Activated CD4-positive, alpha-beta memory T cell treated with anti-CD3 and anti-CD28 coated beads for 36 hours (primary cell): ENCODE measurements at regions of chr12 and their contacts with region 1.

Region 1: GRCh38 chr12:81668475-81668874 is 90.7 kb downstream of the PPFIA2 start:
- DNase-seq: peak; percentile 16
- H3K4me3 Mint-ChIP-seq: no peak overlapping the region
- H3K27ac Mint-ChIP-seq: no peak overlapping the region
- H3K4me1 Mint-ChIP-seq: peaks cover 4% of the 10 kb centered on the region
- H3K27me3 Mint-ChIP-seq: no peaks in the 10 kb centered on the region

Region 2: GRCh38 chr12:81573228-81573627 is 95.2 kb before region 1 on chr12:
- CTCF ChIA-PET with region 1: no interaction called
- POLR2A ChIA-PET with region 1: no interaction called
- intact Hi-C with region 1: no loop called
- DNase-seq: no peak
- H3K4me3 Mint-ChIP-seq: no peak overlapping the region
- H3K27ac Mint-ChIP-seq: no peak overlapping the region
- H3K4me1 Mint-ChIP-seq: no peaks in the 10 kb centered on the region
- H3K27me3 Mint-ChIP-seq: no peaks in the 10 kb centered on the region

Region 3: DNA sequence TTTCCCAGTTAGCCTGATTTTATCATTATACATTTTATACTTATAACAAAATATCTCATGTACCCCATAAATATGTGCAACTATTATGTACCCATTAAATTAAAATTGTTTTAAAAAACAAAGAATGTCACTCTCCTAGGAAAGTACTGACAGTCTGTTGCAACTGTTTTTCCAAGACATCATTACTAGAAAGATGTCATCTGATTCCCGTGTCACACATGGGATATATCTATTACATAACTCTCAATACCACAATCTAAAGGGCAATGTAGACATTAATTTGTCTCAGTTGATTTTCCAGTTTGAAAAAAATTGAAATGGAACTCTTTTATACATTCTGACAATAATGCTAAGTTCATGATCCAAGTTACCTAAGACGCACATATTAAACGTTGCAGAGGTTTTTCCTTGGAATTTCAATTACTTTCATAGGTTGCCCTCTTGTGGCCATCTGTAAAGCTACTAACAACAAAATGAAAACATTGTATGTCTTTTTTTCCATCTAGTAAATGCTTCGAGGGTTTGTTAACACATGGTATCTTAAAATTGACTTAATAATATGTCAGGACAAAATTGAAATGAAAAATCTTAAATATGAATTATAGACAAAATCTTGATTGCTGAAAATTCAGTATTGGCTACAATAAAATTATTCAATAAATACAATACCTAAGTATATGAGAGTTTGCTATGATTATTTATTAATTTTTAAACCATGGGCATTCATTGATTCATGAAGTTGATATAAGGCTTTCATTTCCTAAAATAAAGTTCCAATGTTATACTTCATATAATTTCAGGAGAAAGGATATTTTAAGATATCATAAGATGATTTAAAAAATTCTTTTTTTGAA is 40.9 kb before region 1 on chr12:
- CTCF ChIA-PET with region 1: no interaction called
- POLR2A ChIA-PET with region 1: no interaction called
- intact Hi-C with region 1: no loop called
- DNase-seq: no peak
- H3K4me3 Mint-ChIP-seq: no peak overlapping the region
- H3K27ac Mint-ChIP-seq: no peak overlapping the region
- H3K4me1 Mint-ChIP-seq: no peaks in the 10 kb centered on the region
- H3K27me3 Mint-ChIP-seq: no peaks in the 10 kb centered on the region

Region 4: DNA sequence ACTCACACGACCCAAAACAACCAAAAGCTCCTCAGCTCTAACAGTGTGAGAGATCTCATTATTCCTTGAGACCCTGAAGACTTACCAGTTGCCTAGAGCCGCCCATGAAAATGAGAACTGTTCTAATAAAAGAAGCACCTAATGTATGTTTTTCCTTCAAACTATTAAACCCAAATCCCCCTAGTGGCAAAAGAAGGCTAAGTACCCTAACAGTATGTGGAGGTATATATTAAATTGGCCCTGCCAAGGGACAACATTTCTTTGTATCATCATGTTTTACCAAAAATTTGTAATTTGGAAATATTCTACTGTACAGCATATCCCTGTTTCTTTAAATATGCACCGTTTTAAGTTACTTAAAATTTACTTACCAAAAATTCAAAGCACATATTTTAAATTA is 128.6 kb after region 1 on chr12:
- CTCF ChIA-PET with region 1: no interaction called
- POLR2A ChIA-PET with region 1: no interaction called
- intact Hi-C with region 1: loop called (anchors 1 kb)
- DNase-seq: no peak
- H3K4me3 Mint-ChIP-seq: no peak overlapping the region
- H3K27ac Mint-ChIP-seq: no peak overlapping the region
- H3K4me1 Mint-ChIP-seq: peaks cover 8% of the 10 kb centered on the region
- H3K27me3 Mint-ChIP-seq: peaks cover 2% of the 10 kb centered on the region

Region 5: GRCh38 chr12:81809829-81810595 is 141.5 kb after region 1 on chr12:
- CTCF ChIA-PET with region 1: no interaction called
- POLR2A ChIA-PET with region 1: no interaction called
- intact Hi-C with region 1: loop called (anchors 1 kb)
- DNase-seq: no peak
- H3K4me3 Mint-ChIP-seq: no peak overlapping the region
- H3K27ac Mint-ChIP-seq: no peak overlapping the region
- H3K4me1 Mint-ChIP-seq: peaks cover 9% of the 10 kb centered on the region
- H3K27me3 Mint-ChIP-seq: peaks cover 3% of the 10 kb centered on the region